Colonic mucosa (tissue), 4 donors: ENCODE measurements at regions of chr13 and their contacts with region 1.

Region 1: GRCh38 chr13:100235311-100235901 is 146.5 kb downstream of the PCCA start:
- DNase-seq: peak; percentile 55
- H3K4me3 ChIP-seq: no peak overlapping the region
- H3K27ac ChIP-seq: no peak overlapping the region
- H3K4me1 ChIP-seq: no peaks in the 10 kb centered on the region
- H3K27me3 ChIP-seq: no peaks in the 10 kb centered on the region
- CTCF ChIP-seq: peak; percentile 44

Region 2: DNA sequence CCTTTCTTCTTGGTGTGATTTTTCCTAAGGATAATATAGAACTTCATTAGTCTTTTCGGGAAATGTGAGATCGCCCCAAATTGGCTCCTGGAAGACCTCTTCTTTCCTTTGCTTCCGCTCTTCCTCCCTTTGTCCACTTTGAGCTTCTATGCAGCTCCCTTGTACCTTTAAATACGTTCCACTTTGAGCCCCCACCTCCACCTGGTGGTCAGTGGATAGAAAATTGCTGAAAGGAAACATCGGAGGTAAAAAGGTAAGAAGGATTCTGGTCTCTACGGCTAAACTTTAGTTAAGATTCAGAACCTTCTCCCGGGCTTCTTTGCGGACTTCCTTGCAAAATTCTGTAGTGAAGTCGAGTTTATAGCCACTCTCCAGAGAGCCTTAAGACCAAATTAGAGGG is 789.2 kb before region 1 on chr13:
- intact Hi-C with region 1: no loop called
- DNase-seq: no peak
- H3K4me3 ChIP-seq: no peak overlapping the region
- H3K27ac ChIP-seq: no peak overlapping the region
- H3K4me1 ChIP-seq: no peaks in the 10 kb centered on the region
- H3K27me3 ChIP-seq: no peaks in the 10 kb centered on the region
- CTCF ChIP-seq: no peak

Region 3: GRCh38 chr13:99656092-99656745 is 579.2 kb before region 1 on chr13:
- intact Hi-C with region 1: loop called (anchors 5 kb)
- DNase-seq: peak; percentile 89
- H3K4me3 ChIP-seq: no peak overlapping the region
- H3K27ac ChIP-seq: no peak overlapping the region
- H3K4me1 ChIP-seq: no peaks in the 10 kb centered on the region
- H3K27me3 ChIP-seq: no peaks in the 10 kb centered on the region
- CTCF ChIP-seq: peak; percentile 82

Region 4: DNA sequence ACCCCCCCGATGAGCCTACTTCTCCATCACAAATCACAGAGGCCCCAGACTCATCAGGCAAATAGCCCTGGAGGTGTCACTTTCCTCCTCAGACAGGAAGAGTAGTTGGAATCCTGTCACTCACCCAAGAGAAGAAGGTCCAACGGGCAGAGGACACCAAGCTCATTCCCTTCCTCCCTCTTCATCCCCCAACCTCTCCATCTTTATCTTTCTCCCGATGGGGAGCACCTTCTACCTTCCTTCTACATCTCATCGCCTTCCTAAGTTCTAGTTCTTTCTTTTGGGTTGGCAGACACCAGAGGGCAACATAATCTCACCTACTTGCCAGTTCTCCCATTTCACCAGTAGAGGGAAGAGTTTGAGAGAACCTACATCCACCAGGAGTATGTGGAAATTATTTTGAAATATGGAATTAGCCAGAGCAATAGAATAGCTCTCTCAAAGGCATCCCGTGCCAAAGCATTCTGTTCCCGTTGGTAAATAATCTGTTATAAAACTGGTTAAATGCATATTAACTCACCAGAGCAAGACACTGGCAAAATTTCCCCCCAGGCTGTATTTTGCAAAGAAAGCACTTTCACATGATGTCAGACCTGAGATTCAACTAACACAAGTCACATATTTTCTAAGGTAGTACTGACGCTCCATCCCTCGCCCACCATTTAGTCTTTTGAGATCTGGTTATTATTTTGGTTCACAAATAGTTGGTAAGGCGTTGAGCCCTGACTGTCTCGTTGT is 318.9 kb before region 1 on chr13:
- intact Hi-C with region 1: loop called (anchors 5 kb)
- DNase-seq: peak; percentile 46
- H3K4me3 ChIP-seq: no peak overlapping the region
- H3K27ac ChIP-seq: no peak overlapping the region
- H3K4me1 ChIP-seq: no peaks in the 10 kb centered on the region
- H3K27me3 ChIP-seq: no peaks in the 10 kb centered on the region
- CTCF ChIP-seq: peak; percentile 87

Region 5: DNA sequence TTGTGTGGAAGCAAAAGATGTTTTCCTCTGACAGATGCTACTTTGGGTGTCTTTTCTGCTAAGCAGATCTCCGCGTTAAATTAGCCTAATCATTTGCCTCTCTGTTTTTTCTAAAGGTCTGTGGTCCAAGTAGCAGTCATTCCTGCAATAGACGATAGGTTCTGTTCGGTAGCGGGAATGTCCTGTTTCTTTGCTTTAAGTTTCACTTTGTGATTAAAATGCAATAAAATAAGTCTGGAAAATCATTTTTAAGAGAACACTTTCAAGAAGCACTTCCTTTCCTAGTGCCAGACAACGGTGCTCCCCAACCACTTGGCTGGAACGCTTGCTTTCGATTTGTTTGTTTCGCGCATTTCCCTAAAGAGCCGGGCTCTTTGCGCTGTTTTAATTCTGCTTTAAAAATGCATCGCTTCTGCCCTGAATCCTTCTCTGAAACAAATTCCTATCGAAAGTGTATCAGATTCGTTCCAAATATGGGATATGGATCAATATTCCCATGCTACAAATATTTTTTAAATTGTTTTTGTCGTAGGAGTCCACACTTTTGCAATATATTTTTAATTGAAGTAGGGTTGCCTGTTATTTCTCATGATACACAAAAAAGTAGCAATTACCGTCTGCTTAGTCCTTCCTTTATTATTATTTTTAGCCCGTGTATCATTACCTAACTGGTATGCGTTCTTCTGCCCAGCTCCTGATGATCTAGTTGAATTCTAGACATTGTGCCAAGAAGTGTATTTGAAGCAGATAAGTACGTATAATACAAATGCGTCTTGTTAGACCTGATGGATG is 239.6 kb before region 1 on chr13:
- intact Hi-C with region 1: loop called (anchors 10 kb)
- DNase-seq: no peak
- H3K4me3 ChIP-seq: no peak overlapping the region
- H3K27ac ChIP-seq: no peak overlapping the region
- H3K4me1 ChIP-seq: peaks cover 4% of the 10 kb centered on the region
- H3K27me3 ChIP-seq: peaks cover 86% of the 10 kb centered on the region
- CTCF ChIP-seq: no peak

Region 6: GRCh38 chr13:100088273-100088643 is 147.1 kb before region 1 on chr13:
- intact Hi-C with region 1: no loop called
- DNase-seq: no peak
- H3K4me3 ChIP-seq: peak overlapping the region; percentile 94
- H3K27ac ChIP-seq: peak overlapping the region; percentile 81
- H3K4me1 ChIP-seq: peaks cover 13% of the 10 kb centered on the region
- H3K27me3 ChIP-seq: no peaks in the 10 kb centered on the region
- CTCF ChIP-seq: no peak

Region 7: DNA sequence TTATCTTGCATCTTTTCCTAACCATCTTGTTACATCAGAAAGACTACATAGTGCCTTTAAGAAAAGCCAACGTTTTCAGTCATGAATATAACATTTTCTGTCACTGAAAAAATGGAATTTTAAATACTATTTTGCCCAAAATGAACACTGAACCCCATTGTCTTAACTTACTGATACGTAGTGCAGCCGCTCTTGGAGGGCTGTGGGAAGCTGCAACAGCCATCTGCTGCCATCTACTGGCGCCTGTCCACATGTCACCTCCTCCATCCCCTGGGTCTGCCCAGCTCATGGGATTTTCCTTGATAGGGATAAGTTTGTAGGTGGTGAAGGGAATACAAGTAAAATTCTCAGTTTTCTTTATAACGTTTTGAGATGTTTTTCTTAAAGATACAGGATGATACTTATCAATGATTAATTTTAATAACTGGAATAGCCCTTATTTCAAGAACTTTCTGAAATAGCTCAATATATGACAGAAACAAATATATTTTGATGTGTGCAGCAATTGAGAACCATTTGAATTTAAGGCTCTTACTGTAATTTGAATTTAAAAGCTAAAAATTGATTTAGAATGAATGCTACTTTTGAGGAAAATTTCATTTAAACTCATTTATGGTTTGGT is 279.5 kb after region 1 on chr13:
- intact Hi-C with region 1: loop called (anchors 5 kb)
- DNase-seq: peak; percentile 84
- H3K4me3 ChIP-seq: no peak overlapping the region
- H3K27ac ChIP-seq: no peak overlapping the region
- H3K4me1 ChIP-seq: no peaks in the 10 kb centered on the region
- H3K27me3 ChIP-seq: no peaks in the 10 kb centered on the region
- CTCF ChIP-seq: peak; percentile 88